GM12878 (cell line): ENCODE measurements at regions of chr2 and their contacts with region 1.

Region 1: GRCh38 chr2:20661067-20661980 is 5.6 kb upstream of the GDF7 start:
- DNase-seq: peak; percentile 46
- ATAC-seq: peak; percentile 79
- H3K4me3 ChIP-seq: no peak overlapping the region
- H3K27ac ChIP-seq: no peak overlapping the region
- H3K4me1 ChIP-seq: peaks cover 9% of the 10 kb centered on the region; the same call in 1 of the 2 replicates
- H3K27me3 ChIP-seq: peaks cover 6 to 16% of the 10 kb centered on the region in 2 experiments
- CTCF ChIP-seq: peak; percentile 95 to 97 (median 97); a peak in 5 of 6 replicates
- EP300 ChIP-seq: no peak
- POLR2A ChIP-seq: no peak
- RAD21 ChIP-seq: peak; percentile 99

Region 2: DNA sequence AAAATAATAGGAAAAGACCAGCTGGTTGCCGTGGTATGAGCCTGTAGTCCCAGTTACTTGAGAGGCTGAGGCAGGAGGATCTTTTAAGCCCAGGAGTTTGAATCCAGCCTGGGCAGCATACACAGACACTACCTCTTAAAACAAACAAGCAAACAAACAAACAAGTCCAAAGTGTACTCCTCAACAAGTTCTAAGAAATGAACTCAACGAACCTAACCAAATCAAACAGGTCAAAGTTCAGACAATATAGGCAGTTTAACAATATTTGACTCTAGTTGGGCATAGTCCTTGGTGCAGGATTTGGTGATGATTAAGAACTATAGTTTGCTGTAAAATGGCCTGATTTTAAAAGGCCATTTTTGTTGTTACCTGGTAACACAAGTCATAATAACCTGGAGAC is 256.4 kb before region 1 on chr2:
- CTCF ChIA-PET with region 1: no interaction called
- POLR2A ChIA-PET with region 1: no interaction called
- RAD21 ChIA-PET with region 1: no interaction called
- SMC1A ChIA-PET with region 1: no interaction called
- in situ Hi-C with region 1: no loop called
- intact Hi-C with region 1: no loop called
- DNase-seq: no peak
- ATAC-seq: no peak
- H3K4me3 ChIP-seq: no peak overlapping the region
- H3K27ac ChIP-seq: no peak overlapping the region
- H3K4me1 ChIP-seq: no peaks in the 10 kb centered on the region
- H3K27me3 ChIP-seq: no peaks in the 10 kb centered on the region
- CTCF ChIP-seq: no peak
- EP300 ChIP-seq: no peak
- POLR2A ChIP-seq: no peak
- RAD21 ChIP-seq: no peak

Region 3: DNA sequence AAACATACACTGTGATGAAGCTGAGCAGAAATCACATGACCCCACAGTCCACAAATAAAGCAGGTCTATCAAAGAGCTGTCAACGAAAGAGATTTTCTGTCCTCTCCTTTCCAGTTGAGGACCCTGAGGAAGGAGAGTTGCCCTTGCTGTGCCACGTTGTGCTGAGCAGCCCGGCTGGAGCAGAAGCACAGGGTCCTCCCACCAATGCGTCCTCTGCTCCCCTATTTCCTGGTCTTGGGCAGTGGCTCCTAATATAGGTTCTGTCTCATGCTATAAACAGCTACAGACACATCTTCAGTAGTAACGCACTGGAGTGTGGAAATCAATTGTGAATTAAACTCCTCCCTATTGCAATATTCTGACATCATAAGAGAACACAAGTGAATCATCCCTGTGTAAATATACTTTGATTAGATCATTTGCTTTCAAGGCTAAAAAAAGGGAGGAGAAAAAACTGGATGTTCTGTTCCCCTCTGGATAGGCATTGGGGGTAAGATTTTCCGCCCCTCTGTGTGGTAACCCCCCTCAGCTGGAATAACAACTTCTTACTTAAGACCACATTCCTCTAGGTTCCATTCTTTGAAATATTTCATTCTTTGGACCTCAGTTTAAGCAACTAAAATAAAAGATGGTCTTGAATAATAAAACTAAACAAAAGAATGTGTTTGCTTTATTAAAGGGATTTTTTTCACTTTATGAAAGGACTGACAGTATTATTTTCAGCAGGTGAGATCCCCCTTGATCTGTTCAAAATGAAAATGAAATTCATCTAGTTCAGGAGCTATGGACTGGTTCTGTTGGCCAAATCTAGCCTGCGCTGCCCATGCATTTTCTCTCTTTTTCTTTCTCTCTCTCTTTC is 222.8 kb before region 1 on chr2:
- CTCF ChIA-PET with region 1: interaction called, 10 read pairs
- POLR2A ChIA-PET with region 1: no interaction called
- RAD21 ChIA-PET with region 1: no interaction called
- SMC1A ChIA-PET with region 1: no interaction called
- in situ Hi-C with region 1: no loop called
- intact Hi-C with region 1: no loop called
- DNase-seq: no peak
- ATAC-seq: no peak
- H3K4me3 ChIP-seq: no peak overlapping the region
- H3K27ac ChIP-seq: no peak overlapping the region
- H3K4me1 ChIP-seq: no peaks in the 10 kb centered on the region
- H3K27me3 ChIP-seq: peaks cover 2 to 3% of the 10 kb centered on the region in 2 experiments; a peak in 2 of 4 replicates
- CTCF ChIP-seq: no peak
- EP300 ChIP-seq: no peak
- POLR2A ChIP-seq: no peak
- RAD21 ChIP-seq: no peak

Region 4: DNA sequence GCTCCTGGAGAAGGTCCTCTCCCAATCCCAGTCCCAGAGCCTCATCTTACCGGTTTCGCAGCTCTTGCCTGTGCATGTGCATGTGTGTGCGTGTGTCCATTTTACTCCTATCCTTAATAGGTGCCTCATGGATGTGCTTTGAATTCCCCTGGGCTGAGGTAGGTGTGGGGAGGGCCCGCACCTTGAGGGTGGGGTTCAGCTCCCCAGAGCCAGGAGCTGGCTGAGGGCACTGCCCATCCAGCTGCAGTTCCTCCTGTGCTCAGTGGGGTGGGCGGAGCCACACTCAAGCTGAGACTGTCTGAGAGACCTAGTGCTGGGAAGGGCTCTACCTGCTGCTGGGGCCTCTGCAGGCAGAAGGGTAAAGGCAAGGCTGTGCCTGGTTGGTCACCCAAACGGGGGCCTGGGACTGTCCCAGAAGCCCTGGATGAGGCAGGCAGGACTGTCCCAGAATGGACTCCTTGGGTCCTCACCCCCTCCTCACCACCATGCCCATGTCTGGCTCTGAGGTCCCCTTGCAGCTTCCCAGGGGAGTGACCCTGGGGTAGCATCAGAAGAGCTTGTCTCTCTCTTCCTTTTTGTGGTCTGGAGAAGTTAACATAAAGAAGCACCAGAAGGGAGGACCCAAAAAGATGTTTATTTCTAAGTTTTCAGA is 14.5 kb after region 1 on chr2:
- CTCF ChIA-PET with region 1: interaction called, 82 read pairs
- POLR2A ChIA-PET with region 1: no interaction called
- RAD21 ChIA-PET with region 1: interaction called, 8 read pairs
- SMC1A ChIA-PET with region 1: interaction called, 8 read pairs
- in situ Hi-C with region 1: no loop called
- intact Hi-C with region 1: no loop called
- DNase-seq: peak; percentile 15
- ATAC-seq: peak; percentile 89
- H3K4me3 ChIP-seq: no peak overlapping the region
- H3K27ac ChIP-seq: peak overlapping the region; percentile 69
- H3K4me1 ChIP-seq: peaks cover 37% of the 10 kb centered on the region
- H3K27me3 ChIP-seq: peaks cover 0 to 6% of the 10 kb centered on the region in 2 experiments; a peak in 3 of 4 replicates
- CTCF ChIP-seq: no peak
- EP300 ChIP-seq: no peak
- POLR2A ChIP-seq: no peak
- RAD21 ChIP-seq: no peak

Region 5: DNA sequence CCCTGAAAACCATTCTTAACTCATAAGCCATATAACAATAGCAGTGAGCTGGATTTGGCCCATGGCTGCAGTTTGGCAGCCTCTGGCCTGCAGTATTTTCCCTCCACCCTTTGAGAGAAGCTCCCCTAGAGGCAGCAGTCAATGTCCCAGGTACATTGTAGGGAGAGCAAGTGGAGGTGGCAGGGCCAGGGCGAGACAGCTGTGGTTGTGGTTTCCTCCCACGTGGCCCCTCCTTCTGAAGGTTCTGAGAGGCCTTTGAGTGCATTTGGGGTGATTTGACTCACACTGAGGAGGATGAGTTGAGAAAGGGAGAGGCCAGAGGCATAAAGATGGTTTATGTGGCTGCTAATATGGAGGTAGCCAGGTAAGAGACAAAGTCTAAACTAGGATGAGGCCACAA is 207.1 kb after region 1 on chr2:
- CTCF ChIA-PET with region 1: no interaction called
- POLR2A ChIA-PET with region 1: no interaction called
- RAD21 ChIA-PET with region 1: no interaction called
- SMC1A ChIA-PET with region 1: no interaction called
- in situ Hi-C with region 1: no loop called
- intact Hi-C with region 1: no loop called
- DNase-seq: peak; percentile 27
- ATAC-seq: peak; percentile 97
- H3K4me3 ChIP-seq: no peak overlapping the region
- H3K27ac ChIP-seq: no peak overlapping the region
- H3K4me1 ChIP-seq: no peaks in the 10 kb centered on the region
- H3K27me3 ChIP-seq: no peaks in the 10 kb centered on the region; a peak in 1 of 4 replicates
- CTCF ChIP-seq: peak in 1 of 3 experiments; percentile 19; a peak in 1 of 6 replicates
- EP300 ChIP-seq: 0 out of 4 replicates have a peak, but pooled peaks of 1 of the 2 experiments have one; percentile 12
- POLR2A ChIP-seq: no peak
- RAD21 ChIP-seq: no peak

Region 6: GRCh38 chr2:20962939-20963557 is 301.7 kb after region 1 on chr2:
- CTCF ChIA-PET with region 1: interaction called, 218 read pairs
- POLR2A ChIA-PET with region 1: interaction called, 6 read pairs
- RAD21 ChIA-PET with region 1: interaction called, 68 read pairs
- SMC1A ChIA-PET with region 1: interaction called, 101 read pairs
- in situ Hi-C with region 1: loop called (anchors 5 kb)
- intact Hi-C with region 1: loop called (anchors 1 kb)
- DNase-seq: no peak
- ATAC-seq: peak; percentile 91
- H3K4me3 ChIP-seq: no peak overlapping the region
- H3K27ac ChIP-seq: no peak overlapping the region
- H3K4me1 ChIP-seq: no peaks in the 10 kb centered on the region
- H3K27me3 ChIP-seq: no peaks in the 10 kb centered on the region; a peak in 1 of 4 replicates
- CTCF ChIP-seq: peak; percentile 81 to 84 (median 82)
- EP300 ChIP-seq: no peak
- POLR2A ChIP-seq: no peak
- RAD21 ChIP-seq: peak; percentile 86

Region 7: GRCh38 chr2:21118302-21118920 is 457.1 kb after region 1 on chr2:
- CTCF ChIA-PET with region 1: interaction called, 10 read pairs
- POLR2A ChIA-PET with region 1: no interaction called
- RAD21 ChIA-PET with region 1: no interaction called
- SMC1A ChIA-PET with region 1: interaction called, 7 read pairs
- in situ Hi-C with region 1: loop called (anchors 25 kb)
- intact Hi-C with region 1: loop called (anchors 2 kb)
- DNase-seq: no peak
- ATAC-seq: peak; percentile 71
- H3K4me3 ChIP-seq: no peak overlapping the region
- H3K27ac ChIP-seq: no peak overlapping the region
- H3K4me1 ChIP-seq: no peaks in the 10 kb centered on the region
- H3K27me3 ChIP-seq: no peaks in the 10 kb centered on the region
- CTCF ChIP-seq: peak; percentile 39 to 54 (median 45); a peak in 4 of 6 replicates
- EP300 ChIP-seq: no peak
- POLR2A ChIP-seq: no peak
- RAD21 ChIP-seq: peak; percentile 45